ENCODE measurements at regions of chr12 and their contacts with region 1.

Region 1: GRCh38 chr12:57063991-57064685 is 14.2 kb upstream of the MYO1A start:
- DNase-seq: peak; percentile 52
- H3K4me3 Mint-ChIP-seq: peak overlapping the region; percentile 80
- H3K27ac Mint-ChIP-seq: peak overlapping the region; percentile 98
- H3K4me1 Mint-ChIP-seq: peaks cover 41% of the 10 kb centered on the region
- H3K27me3 Mint-ChIP-seq: no peaks in the 10 kb centered on the region

Region 2: DNA sequence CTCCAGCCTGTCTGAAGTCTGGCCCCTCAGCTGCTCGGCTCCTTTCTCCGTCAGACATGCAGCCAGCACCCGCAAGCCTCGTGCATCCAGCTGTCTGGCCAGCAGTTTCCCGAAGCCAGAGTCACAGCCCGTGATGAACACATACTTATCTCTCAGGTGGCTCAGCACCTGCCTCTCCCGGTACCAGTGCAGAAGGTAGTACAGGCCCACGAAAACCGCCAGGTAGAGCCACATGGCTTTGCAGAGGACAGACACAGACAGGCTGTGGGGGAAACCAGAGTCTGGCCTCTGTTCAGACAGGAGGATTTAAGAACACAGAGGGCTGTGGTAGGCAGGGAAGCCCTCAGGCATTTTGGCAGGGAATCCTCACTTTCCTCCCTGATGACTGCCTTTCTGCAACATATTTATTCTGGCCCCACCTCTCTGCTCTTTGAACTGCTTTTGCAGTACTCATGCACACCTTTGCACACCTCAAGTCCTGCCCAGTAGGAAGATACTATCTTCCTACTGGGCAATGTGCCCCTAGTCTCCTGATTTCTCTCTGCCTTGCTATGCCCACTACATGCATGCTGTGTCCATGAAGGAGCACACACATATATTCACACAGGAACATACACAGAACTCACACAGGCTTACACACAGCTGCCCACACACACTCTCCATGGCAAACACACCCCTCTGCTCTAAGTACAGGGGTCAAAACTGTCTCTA is 106.8 kb before region 1 on chr12 and contains the start of gene RDH16:
- intact Hi-C with region 1: no loop called
- DNase-seq: no peak
- H3K4me3 Mint-ChIP-seq: no peak within 1 kb of the TSS
- H3K27ac Mint-ChIP-seq: no peak within 1 kb of the TSS
- H3K4me1 Mint-ChIP-seq: no peaks in the 10 kb centered on the region
- H3K27me3 Mint-ChIP-seq: peaks cover 11% of the 10 kb centered on the region
- total RNA-seq, gene RDH16: 0.30 and 0.41 TPM in 2 replicates

Region 3: DNA sequence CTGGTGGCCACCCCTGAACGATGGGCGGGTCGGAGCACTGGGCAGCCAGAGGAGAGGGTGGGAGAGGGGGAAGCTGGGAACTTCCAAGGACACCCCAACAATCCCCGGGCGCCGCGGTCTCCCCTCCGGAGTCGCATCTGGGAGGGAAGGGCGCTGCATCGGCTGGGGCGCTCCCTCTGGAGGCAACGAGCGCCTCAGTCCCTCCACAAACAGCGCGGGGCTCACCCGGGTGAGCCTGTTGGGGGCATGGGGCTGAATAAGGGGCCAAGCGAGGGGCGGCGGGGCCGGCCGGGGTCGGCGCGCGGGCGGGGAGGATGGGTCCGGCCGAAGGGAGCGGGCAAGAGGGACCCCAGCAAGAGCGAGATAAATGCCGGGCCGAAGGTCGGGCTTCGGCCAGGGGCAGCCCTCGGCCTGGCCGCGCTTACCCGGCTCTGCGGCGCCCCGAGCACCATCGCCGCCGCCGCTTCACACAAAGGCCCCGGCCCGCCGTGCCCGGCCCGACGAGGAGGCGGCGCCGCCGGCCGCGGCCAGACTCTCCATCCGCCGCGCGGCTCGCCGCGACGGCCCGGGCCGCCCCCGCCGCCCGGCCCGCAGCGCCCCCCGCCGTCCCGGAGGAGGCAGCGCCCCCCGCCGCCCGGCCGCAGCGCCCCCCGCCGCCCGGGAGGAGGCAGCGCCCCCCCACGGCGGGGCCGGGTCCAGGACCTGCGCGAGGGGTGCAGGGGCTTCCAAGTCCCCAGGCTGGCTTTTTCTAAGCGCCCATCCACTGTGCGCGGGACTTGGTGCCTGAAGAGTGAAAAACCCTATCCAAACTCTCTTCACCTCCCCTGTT is 57.9 kb before region 1 on chr12 and contains the start of gene ZBTB39:
- intact Hi-C with region 1: loop called (anchors 1 kb)
- DNase-seq: peak; percentile 60
- H3K4me3 Mint-ChIP-seq: peak within 1 kb of the TSS; percentile 95
- H3K27ac Mint-ChIP-seq: peak within 1 kb of the TSS; percentile 89
- H3K4me1 Mint-ChIP-seq: peaks cover 39% of the 10 kb centered on the region
- H3K27me3 Mint-ChIP-seq: no peaks in the 10 kb centered on the region
- total RNA-seq, gene ZBTB39: 10.5 and 10.6 TPM in 2 replicates

Region 4: GRCh38 chr12:57046947-57047890 is 16.9 kb before region 1 on chr12:
- intact Hi-C with region 1: loop called (anchors 2 kb)
- DNase-seq: peak; percentile 39
- H3K4me3 Mint-ChIP-seq: peak overlapping the region; percentile 3
- H3K27ac Mint-ChIP-seq: peak overlapping the region; percentile 87
- H3K4me1 Mint-ChIP-seq: peaks cover 45% of the 10 kb centered on the region
- H3K27me3 Mint-ChIP-seq: no peaks in the 10 kb centered on the region

Region 5: GRCh38 chr12:57088459-57089248 is 24.5 kb after region 1 on chr12 and contains the start of gene NAB2:
- intact Hi-C with region 1: loop called (anchors 1 kb)
- DNase-seq: peak; percentile 91
- H3K4me3 Mint-ChIP-seq: peak within 1 kb of the TSS; percentile 99
- H3K27ac Mint-ChIP-seq: peak within 1 kb of the TSS; percentile 98
- H3K4me1 Mint-ChIP-seq: peaks cover 62% of the 10 kb centered on the region
- H3K27me3 Mint-ChIP-seq: no peaks in the 10 kb centered on the region
- total RNA-seq, gene NAB2: 72.8 and 74.7 TPM in 2 replicates

Region 6: GRCh38 chr12:57208631-57209282 is 144.6 kb after region 1 on chr12:
- intact Hi-C with region 1: no loop called
- DNase-seq: no peak
- H3K4me3 Mint-ChIP-seq: no peak overlapping the region
- H3K27ac Mint-ChIP-seq: no peak overlapping the region
- H3K4me1 Mint-ChIP-seq: peaks cover 6% of the 10 kb centered on the region
- H3K27me3 Mint-ChIP-seq: peaks cover 5% of the 10 kb centered on the region

Region 7: GRCh38 chr12:57389033-57389432 is 324.9 kb after region 1 on chr12:
- intact Hi-C with region 1: no loop called
- DNase-seq: no peak
- H3K4me3 Mint-ChIP-seq: no peak overlapping the region
- H3K27ac Mint-ChIP-seq: no peak overlapping the region
- H3K4me1 Mint-ChIP-seq: no peaks in the 10 kb centered on the region
- H3K27me3 Mint-ChIP-seq: no peaks in the 10 kb centered on the region